Activated CD8-positive, alpha-beta T cell treated with anti-CD3 and anti-CD28 coated beads for 36 hours (primary cell): ENCODE measurements at regions of chr2 and their contacts with region 1.

Region 1: DNA sequence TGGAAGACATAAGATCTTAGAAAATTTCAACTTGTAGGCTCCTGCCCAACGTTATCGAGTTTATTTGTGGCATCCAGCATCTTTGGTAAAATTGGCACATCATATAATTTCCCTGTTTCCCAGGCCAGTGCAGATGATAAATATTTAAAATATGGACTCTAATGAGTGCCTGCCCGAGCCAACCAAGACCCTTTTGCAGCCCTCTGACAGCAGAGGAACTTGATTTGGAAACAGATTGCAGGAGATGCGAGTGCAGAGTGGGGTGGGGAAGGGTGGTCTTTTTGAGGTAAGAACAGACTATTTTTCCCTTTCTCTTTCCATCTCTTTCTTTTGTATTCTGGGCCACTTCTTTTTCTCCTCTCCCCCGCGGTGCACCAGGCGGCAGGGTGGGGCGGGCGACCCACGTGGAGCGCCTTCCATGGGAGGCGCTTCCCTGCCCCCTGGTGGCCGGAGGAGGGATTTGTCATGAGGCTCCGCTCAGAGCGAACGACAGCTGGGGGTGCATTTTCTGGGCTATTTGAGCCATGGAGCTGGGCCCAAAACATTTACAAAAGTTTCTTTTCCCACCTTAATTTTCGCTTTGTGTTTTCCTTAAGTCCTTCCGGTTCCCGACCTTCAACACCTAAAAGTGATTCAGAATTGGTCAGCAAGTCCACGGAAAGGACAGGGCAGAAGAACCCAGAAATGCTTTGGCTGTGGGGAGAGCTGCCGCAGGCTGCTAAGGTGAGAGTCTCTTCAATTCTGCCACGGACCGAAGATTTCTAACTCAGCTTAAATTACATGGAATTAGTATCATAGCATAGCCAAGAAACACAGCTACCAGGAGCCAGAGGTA is 32.7 kb downstream of the LPIN1 start:
- DNase-seq: peak; percentile 91
- ATAC-seq: peak; percentile 94
- H3K4me3 Mint-ChIP-seq: peak overlapping the region; percentile 42
- H3K27ac Mint-ChIP-seq: peak overlapping the region; percentile 56
- H3K4me1 Mint-ChIP-seq: peaks cover 42% of the 10 kb centered on the region
- H3K27me3 Mint-ChIP-seq: no peaks in the 10 kb centered on the region
- CTCF ChIP-seq: peak; percentile 95

Region 2: GRCh38 chr2:11621410-11621809 is 157.7 kb before region 1 on chr2:
- CTCF ChIA-PET with region 1: no interaction called
- POLR2A ChIA-PET with region 1: no interaction called
- intact Hi-C with region 1: no loop called
- DNase-seq: no peak
- ATAC-seq: no peak
- H3K4me3 Mint-ChIP-seq: no peak overlapping the region
- H3K27ac Mint-ChIP-seq: no peak overlapping the region
- H3K4me1 Mint-ChIP-seq: no peaks in the 10 kb centered on the region
- H3K27me3 Mint-ChIP-seq: no peaks in the 10 kb centered on the region
- CTCF ChIP-seq: no peak

Region 3: DNA sequence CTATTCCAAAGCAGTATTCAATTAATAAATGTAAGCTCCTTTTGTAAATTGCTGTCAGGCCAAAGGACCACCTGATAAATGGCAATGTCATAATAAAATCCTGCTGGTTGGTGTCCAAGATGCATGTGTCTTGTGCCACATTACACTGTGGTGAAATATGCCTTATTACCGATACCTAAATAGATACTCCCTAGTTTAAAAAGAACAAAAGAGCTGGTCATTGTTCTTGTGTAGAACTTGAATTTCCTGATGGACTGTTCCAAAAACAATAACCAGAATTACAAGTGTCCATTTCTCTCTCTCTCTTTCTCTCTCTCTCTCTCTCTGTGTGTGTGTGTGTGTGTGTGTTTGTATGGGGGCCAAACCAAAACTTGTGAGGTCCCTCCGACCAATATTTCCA is 46.6 kb before region 1 on chr2:
- CTCF ChIA-PET with region 1: interaction called, 21 read pairs
- POLR2A ChIA-PET with region 1: no interaction called
- intact Hi-C with region 1: no loop called
- DNase-seq: no peak
- ATAC-seq: no peak
- H3K4me3 Mint-ChIP-seq: no peak overlapping the region
- H3K27ac Mint-ChIP-seq: no peak overlapping the region
- H3K4me1 Mint-ChIP-seq: no peaks in the 10 kb centered on the region
- H3K27me3 Mint-ChIP-seq: peaks cover 3% of the 10 kb centered on the region
- CTCF ChIP-seq: no peak

Region 4: DNA sequence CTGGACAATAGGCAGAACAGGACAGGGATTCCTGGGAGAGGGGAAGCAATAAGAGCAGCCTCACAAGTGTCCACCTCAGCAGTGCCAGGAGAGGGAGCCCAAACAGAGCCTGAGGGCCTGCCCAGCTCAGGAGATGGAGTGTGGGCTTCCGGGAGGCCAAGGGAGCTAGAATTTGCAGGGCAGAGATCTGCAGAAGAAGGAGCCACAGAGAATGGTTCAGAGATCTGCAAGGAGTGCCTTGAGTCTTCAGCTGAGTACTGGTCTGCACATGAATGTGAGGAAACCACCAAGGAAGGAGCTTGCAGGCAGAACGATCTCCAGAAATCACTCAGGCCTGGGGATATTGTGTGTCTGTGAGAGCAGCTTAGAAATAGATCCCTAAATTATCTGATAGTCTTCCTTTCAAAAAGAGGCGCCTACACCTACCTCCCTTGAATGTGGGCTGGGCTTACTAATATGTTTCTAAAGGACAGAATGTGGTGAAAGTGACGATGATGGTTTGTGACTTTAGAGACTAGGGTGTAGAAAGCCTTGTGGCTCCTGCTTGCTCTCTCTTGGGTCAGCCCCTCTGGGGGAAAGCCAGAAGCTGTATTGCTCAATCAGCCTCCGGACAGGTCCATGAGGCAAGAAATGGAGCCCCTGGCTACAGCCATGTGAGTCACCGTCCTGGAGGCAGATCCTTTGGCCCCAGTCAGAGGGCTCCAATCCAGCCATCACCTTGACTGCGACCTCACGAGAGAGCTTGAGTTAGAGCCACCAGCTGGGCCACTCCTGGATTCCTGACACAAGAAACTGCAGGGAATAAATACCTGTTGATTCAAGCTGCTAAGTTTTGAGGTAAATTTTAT is 40.3 kb before region 1 on chr2:
- CTCF ChIA-PET with region 1: interaction called, 282 read pairs
- POLR2A ChIA-PET with region 1: interaction called, 3 read pairs
- intact Hi-C with region 1: loop called (anchors 5 kb)
- DNase-seq: peak; percentile 50
- ATAC-seq: peak; percentile 82
- H3K4me3 Mint-ChIP-seq: no peak overlapping the region
- H3K27ac Mint-ChIP-seq: no peak overlapping the region
- H3K4me1 Mint-ChIP-seq: peaks cover 10% of the 10 kb centered on the region
- H3K27me3 Mint-ChIP-seq: no peaks in the 10 kb centered on the region
- CTCF ChIP-seq: no peak

Region 5: DNA sequence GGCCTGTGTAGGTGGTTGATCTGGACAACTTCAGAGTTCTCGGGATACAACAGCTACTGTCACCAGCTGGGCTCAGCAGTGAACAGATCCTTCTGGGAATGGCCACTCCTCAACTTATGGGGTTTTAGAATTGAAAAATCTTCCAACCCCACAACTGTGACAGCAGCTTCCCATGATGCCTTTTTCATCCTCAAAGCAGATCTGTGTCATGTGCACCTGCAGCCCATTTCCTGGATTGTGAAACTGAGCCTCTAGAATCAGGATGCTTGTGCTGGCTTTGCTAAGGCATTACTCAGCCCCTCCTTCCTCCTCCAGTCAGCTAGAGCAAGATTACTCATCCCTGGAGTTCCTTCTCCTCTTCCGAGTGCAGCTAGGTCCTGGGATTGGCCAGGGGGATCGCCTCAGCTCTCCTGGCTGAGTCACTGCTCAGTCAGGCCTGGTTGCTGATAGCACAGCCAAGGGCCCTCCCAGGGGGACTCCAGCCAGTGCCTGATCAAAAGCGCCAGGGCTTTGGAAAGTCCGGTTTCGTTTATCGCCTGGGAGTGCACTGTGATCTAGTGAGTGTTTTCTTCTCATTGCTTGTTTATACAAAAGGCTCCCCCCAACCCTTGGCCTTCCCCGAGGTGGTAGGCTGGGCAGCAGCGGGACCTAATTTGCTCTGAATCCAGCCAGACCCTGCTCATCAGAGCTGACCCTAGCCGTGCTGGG is 35.1 kb before region 1 on chr2:
- CTCF ChIA-PET with region 1: interaction called, 282 read pairs
- POLR2A ChIA-PET with region 1: interaction called, 7 read pairs
- intact Hi-C with region 1: loop called (anchors 5 kb)
- DNase-seq: peak; percentile 83
- ATAC-seq: peak; percentile 62
- H3K4me3 Mint-ChIP-seq: peak overlapping the region; percentile 22
- H3K27ac Mint-ChIP-seq: peak overlapping the region; percentile 72
- H3K4me1 Mint-ChIP-seq: peaks cover 45% of the 10 kb centered on the region
- H3K27me3 Mint-ChIP-seq: no peaks in the 10 kb centered on the region
- CTCF ChIP-seq: no peak